Activated T-helper 2 cell treated with anti-CD3 and anti-CD28 coated beads, Interferon-gamma antibody, Interleukin-2, Interleukin-4, amounts not matched to agents 10 μg/mL and 5 μg/mL and 100 μg/mL, durations not matched to agents 14 hours and 24 hours and 36 hours (primary cell): ENCODE measurements at regions of chr2 and their contacts with region 1.

Region 1: GRCh38 chr2:236180831-236181453 is 12.8 kb upstream of the GBX2 start:
- DNase-seq: no peak
- H3K4me3 Mint-ChIP-seq: no peak overlapping the region
- H3K27ac Mint-ChIP-seq: peak overlapping the region; percentile 55
- H3K4me1 Mint-ChIP-seq: peaks cover 4% of the 10 kb centered on the region
- H3K27me3 Mint-ChIP-seq: peaks cover 31% of the 10 kb centered on the region

Region 2: DNA sequence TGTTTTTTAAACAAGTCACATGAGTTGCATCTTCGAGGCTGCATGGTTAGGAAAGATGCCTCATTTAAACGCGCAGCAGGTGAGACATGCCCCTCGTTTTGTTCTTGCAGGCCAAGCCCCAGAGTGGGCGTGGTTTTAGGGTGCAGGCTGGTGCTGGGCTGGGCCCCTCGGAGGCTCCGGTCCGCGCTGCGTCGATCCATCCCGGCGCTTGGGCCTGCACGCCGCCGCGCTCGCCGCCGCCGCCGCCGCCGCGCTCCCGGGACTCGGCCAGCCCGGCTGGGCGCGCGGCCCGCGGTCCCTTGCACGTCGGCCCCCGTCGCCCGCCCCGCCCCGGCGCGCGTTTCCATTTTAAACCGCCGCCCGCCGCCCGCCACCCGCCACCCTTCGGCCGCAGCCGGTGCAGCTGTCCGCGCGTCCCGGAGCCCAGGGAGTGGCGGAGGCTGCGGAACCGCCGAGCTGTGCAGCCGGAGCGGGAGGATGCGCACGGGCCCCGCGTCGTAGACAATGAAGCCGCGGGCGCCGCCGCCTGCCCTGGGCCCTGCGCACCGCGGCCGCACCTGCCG is 511.6 kb before region 1 on chr2:
- intact Hi-C with region 1: loop called (anchors 5 kb)
- DNase-seq: no peak
- H3K4me3 Mint-ChIP-seq: no peak overlapping the region
- H3K27ac Mint-ChIP-seq: no peak overlapping the region
- H3K4me1 Mint-ChIP-seq: peaks cover 1% of the 10 kb centered on the region
- H3K27me3 Mint-ChIP-seq: peaks cover 62% of the 10 kb centered on the region

Region 3: GRCh38 chr2:235766278-235766677 is 414.7 kb before region 1 on chr2:
- intact Hi-C with region 1: loop called (anchors 1 kb)
- DNase-seq: peak; percentile 21
- H3K4me3 Mint-ChIP-seq: no peak overlapping the region
- H3K27ac Mint-ChIP-seq: no peak overlapping the region
- H3K4me1 Mint-ChIP-seq: no peaks in the 10 kb centered on the region
- H3K27me3 Mint-ChIP-seq: no peaks in the 10 kb centered on the region

Region 4: DNA sequence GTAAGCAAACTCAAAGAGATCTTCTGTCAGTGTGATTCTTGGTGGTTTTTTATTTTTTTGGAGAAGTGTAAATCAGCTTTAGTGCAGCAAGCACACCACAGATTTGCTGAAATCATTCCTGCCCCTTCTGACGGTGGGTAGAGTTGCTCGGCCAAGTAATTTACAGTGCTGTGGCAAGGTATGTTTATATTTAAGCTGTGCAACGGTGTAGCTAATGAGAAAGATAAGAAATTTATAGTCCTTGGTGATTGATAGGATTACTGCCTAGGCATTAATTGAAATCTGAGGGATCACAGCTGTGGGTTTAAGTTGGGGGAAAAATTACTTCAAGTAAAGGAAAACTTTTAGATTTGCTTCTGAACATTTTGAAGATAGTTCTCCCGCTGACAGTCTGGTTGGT is 400.5 kb before region 1 on chr2:
- intact Hi-C with region 1: loop called (anchors 5 kb)
- DNase-seq: no peak
- H3K4me3 Mint-ChIP-seq: no peak overlapping the region
- H3K27ac Mint-ChIP-seq: no peak overlapping the region
- H3K4me1 Mint-ChIP-seq: no peaks in the 10 kb centered on the region
- H3K27me3 Mint-ChIP-seq: peaks cover 4% of the 10 kb centered on the region

Region 5: GRCh38 chr2:235820571-235820970 is 360.4 kb before region 1 on chr2:
- intact Hi-C with region 1: no loop called
- DNase-seq: no peak
- H3K4me3 Mint-ChIP-seq: no peak overlapping the region
- H3K27ac Mint-ChIP-seq: no peak overlapping the region
- H3K4me1 Mint-ChIP-seq: no peaks in the 10 kb centered on the region
- H3K27me3 Mint-ChIP-seq: no peaks in the 10 kb centered on the region

Region 6: DNA sequence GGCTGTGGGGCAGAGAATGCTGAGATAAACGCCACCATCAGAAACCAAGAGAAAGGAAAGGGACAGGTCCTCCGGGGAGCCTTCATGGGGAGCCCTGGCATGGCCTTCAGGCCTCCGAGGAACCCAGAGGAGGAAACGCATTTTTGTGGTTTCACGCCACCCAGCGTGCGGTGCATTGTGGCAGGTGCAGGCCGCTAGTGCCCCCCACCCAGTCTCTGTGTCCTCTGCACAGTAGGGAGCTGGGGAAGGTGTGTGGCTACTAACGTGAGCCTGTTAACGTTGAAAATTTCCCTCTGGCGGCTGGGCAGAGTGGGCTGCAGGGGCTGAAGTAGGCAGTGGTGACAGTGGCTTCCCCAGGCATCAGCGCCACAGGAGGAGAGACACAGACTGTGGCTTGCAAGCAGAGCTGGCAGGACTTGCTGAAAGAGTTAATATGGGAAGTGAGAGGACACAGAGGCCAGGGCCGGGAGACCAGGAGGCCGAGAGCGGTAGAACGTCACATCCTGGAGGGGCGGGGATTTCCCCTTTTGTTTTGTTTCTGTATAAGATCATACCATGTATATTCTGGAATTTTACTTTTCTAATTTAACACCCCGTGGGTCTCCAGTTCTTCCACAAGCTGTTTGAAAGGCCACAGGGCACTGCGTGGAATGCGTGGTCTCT is 179.6 kb before region 1 on chr2:
- intact Hi-C with region 1: no loop called
- DNase-seq: no peak
- H3K4me3 Mint-ChIP-seq: no peak overlapping the region
- H3K27ac Mint-ChIP-seq: no peak overlapping the region
- H3K4me1 Mint-ChIP-seq: no peaks in the 10 kb centered on the region
- H3K27me3 Mint-ChIP-seq: no peaks in the 10 kb centered on the region